Activated T-helper 1 cell treated with anti-CD3 and anti-CD28 coated beads, Interleukin-12 subunit alpha, Interleukin-12 subunit beta, Interleukin-2, Interleukin-4 antibody, amounts not matched to agents 30 ng/mL and 10 ng/mL and 1 ng/mL, durations not matched to agents 14 hours and 24 hours and 36 hours (primary cell): ENCODE measurements at regions of chr4 and their contacts with region 1.

Region 1: DNA sequence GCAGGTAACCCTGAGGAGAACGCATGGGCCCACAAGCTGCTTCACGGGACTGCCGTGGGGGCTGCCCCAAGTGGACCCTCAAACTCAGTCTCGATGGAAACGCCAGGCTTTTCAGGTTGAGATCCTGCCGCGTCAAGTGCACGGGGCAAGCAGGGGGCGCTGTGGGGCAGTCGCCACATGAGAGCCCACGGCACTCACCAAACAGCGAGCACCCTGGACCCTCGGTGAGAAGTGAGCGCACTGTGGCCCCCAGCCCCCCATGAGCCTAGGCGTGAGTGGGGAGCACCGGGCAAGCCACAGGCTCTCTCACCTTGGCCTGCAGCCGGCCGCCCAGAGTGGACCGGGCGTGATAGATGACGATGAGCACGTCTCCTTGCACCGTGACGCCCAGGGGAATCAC is 50.9 kb upstream of the CPLX1 start:
- DNase-seq: no peak
- H3K4me3 Mint-ChIP-seq: no peak overlapping the region
- H3K27ac Mint-ChIP-seq: peak overlapping the region; percentile 81
- H3K4me1 Mint-ChIP-seq: peaks cover 41% of the 10 kb centered on the region
- H3K27me3 Mint-ChIP-seq: no peaks in the 10 kb centered on the region

Region 2: GRCh38 chr4:742742-743311 is 134.0 kb before region 1 on chr4:
- intact Hi-C with region 1: loop called (anchors 2 kb)
- DNase-seq: peak; percentile 63
- H3K4me3 Mint-ChIP-seq: no peak overlapping the region
- H3K27ac Mint-ChIP-seq: no peak overlapping the region
- H3K4me1 Mint-ChIP-seq: no peaks in the 10 kb centered on the region
- H3K27me3 Mint-ChIP-seq: no peaks in the 10 kb centered on the region

Region 3: GRCh38 chr4:924107-925096 is 47.6 kb after region 1 on chr4:
- intact Hi-C with region 1: loop called (anchors 1 kb)
- DNase-seq: no peak
- H3K4me3 Mint-ChIP-seq: peak overlapping the region; percentile 53
- H3K27ac Mint-ChIP-seq: peak overlapping the region; percentile 77
- H3K4me1 Mint-ChIP-seq: peaks cover 50% of the 10 kb centered on the region
- H3K27me3 Mint-ChIP-seq: no peaks in the 10 kb centered on the region

Region 4: GRCh38 chr4:973431-974397 is 96.9 kb after region 1 on chr4 and contains the start of gene DGKQ:
- intact Hi-C with region 1: loop called (anchors 1 kb)
- DNase-seq: peak; percentile 80
- H3K4me3 Mint-ChIP-seq: peak within 1 kb of the TSS; percentile 51
- H3K27ac Mint-ChIP-seq: no peak within 1 kb of the TSS
- H3K4me1 Mint-ChIP-seq: no peaks in the 10 kb centered on the region
- H3K27me3 Mint-ChIP-seq: no peaks in the 10 kb centered on the region
- total RNA-seq, gene DGKQ: 17.8 and 18.0 TPM in 2 replicates

Region 5: GRCh38 chr4:1712216-1713002 is 835.6 kb after region 1 on chr4 and contains the start of gene SLBP:
- intact Hi-C with region 1: loop called (anchors 1 kb)
- DNase-seq: peak; percentile 99
- H3K4me3 Mint-ChIP-seq: peak within 1 kb of the TSS; percentile 99
- H3K27ac Mint-ChIP-seq: peak within 1 kb of the TSS; percentile 89
- H3K4me1 Mint-ChIP-seq: peaks cover 59% of the 10 kb centered on the region
- H3K27me3 Mint-ChIP-seq: no peaks in the 10 kb centered on the region
- total RNA-seq, gene SLBP: 136 and 140 TPM in 2 replicates